CD4-positive, alpha-beta memory T cell (primary cell): ENCODE measurements at regions of chr2 and their contacts with region 1.

Region 1: GRCh38 chr2:43131024-43131889 is 95.1 kb downstream of the ZFP36L2 start:
- DNase-seq: peak; percentile 90 to 96 (median 91)
- H3K4me3 ChIP-seq: peak overlapping the region; percentile 26 to 31
- H3K4me3 Mint-ChIP-seq: peak overlapping the region; percentile 17 to 86 (median 64)
- H3K27ac ChIP-seq: peak overlapping the region; percentile 83
- H3K27ac Mint-ChIP-seq: peak overlapping the region; percentile 97 to 100 (median 100)
- H3K4me1 ChIP-seq: peaks cover 91% of the 10 kb centered on the region
- H3K4me1 Mint-ChIP-seq: peaks cover 67 to 92% (median 81%) of the 10 kb centered on the region in 4 donors
- H3K27me3 ChIP-seq: no peaks in the 10 kb centered on the region
- H3K27me3 Mint-ChIP-seq: no peaks in the 10 kb centered on the region

Region 2: GRCh38 chr2:42974721-42975717 is 156.2 kb before region 1 on chr2:
- CTCF ChIA-PET with region 1: interaction called, 5 read pairs
- POLR2A ChIA-PET with region 1: interaction called, 3 read pairs
- intact Hi-C with region 1: loop called (anchors 10 kb)
- DNase-seq: peak in 4 of 5 donors; percentile 25 to 43 (median 29)
- H3K4me3 ChIP-seq: no peak overlapping the region
- H3K4me3 Mint-ChIP-seq: no peak overlapping the region
- H3K27ac ChIP-seq: no peak overlapping the region
- H3K27ac Mint-ChIP-seq: peak overlapping the region in 1 of 7 donors; percentile 50
- H3K4me1 ChIP-seq: no peaks in the 10 kb centered on the region
- H3K4me1 Mint-ChIP-seq: peaks cover 0 to 5% (median 3%) of the 10 kb centered on the region in 4 donors
- H3K27me3 ChIP-seq: no peaks in the 10 kb centered on the region
- H3K27me3 Mint-ChIP-seq: no peaks in the 10 kb centered on the region

Region 3: DNA sequence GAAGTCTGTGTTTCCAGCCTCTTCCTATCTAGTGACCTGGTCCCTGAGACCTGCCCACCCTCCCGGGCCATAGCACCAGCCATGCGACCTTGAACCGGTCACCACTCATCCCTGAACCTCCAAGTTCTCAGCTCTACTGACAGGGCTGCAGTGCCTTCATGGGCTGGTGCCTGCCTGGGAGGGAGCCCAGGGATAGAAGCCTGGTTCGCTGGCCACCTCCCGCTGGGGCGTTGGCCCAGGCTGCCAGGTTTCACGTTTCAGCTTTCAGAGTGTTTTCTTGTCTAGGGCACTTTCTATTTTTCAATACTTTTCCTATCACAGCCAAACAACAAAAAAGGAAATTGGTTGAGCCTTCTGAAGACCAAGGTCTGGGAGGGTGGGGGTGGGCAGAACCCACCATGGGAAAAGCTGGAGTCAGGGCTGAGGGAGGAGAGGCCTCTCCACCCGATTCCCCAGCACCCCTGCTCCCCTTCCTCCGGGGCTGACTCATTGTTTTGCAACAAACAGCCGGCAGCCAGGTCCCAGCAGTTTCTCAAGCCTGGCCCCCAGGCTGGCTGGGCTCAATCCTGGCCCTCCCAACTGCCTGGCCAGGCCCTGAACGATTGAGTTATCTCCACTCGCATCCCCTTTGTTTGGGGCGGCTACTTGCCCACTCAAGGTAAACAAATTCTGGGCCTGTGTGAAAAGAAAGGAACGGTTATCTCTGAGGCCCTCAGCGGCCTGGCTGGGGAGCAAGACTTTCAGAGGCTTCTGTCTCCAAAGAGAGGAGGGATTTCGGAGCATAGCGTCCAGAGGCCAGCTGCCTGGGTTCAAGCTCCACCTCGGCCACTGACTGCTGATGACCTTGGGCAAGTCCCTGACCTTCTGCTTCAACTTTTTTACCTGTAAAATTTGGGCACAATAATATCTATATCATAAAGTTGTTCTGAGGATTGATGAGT is 47.6 kb after region 1 on chr2:
- CTCF ChIA-PET with region 1: interaction called, 361 read pairs
- POLR2A ChIA-PET with region 1: interaction called, 1,220 read pairs
- intact Hi-C with region 1: loop called (anchors 1 kb)
- DNase-seq: peak in 1 of 5 donors; percentile 61
- H3K4me3 ChIP-seq: peak overlapping the region in 1 of 2 donors; percentile 7
- H3K4me3 Mint-ChIP-seq: peak overlapping the region in 7 of 8 donors; percentile 54 to 82 (median 72)
- H3K27ac ChIP-seq: peak overlapping the region; percentile 53
- H3K27ac Mint-ChIP-seq: peak overlapping the region; percentile 93 to 99 (median 98)
- H3K4me1 ChIP-seq: peaks cover 84% of the 10 kb centered on the region
- H3K4me1 Mint-ChIP-seq: peaks cover 58 to 80% (median 70%) of the 10 kb centered on the region in 4 donors
- H3K27me3 ChIP-seq: no peaks in the 10 kb centered on the region
- H3K27me3 Mint-ChIP-seq: no peaks in the 10 kb centered on the region

Region 4: DNA sequence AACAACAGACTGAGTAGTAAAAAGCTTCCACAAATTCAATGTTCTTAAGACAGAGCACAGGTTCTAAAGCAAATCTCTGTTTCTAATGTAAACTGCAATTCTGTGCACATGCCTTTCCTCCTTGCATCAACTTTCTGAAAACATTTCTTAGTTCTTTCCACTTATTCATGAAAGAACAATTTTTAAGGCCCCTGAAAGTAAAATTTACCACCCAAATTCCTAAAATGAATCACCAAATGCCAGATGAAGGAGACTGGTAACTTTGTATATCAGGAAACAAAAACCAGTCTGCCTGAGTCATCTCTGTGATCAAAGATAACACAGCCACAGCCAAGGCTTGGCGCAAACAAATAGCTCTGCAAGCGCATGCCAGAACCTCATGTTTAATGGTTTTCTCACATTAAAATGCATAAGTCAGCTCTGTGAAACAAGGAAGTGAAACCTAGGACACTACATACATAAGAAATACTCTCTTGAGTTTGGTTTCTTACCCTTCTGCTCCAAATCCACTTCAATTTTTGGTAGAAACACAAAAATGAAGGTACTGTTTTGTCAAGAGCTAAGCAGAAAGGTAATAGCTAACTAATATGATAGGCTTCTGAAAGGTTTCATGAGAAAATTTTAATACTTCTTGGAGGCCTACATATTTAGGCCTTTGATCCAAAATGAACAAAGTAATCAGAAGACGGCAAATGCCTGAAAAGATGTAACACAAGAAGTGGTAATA is 295.2 kb after region 1 on chr2:
- CTCF ChIA-PET with region 1: interaction called, 3 read pairs
- POLR2A ChIA-PET with region 1: interaction called, 3 read pairs
- intact Hi-C with region 1: loop called (anchors 5 kb)
- DNase-seq: peak; percentile 56 to 77 (median 61)
- H3K4me3 ChIP-seq: no peak overlapping the region
- H3K4me3 Mint-ChIP-seq: peak overlapping the region; percentile 1 to 81 (median 51)
- H3K27ac ChIP-seq: peak overlapping the region; percentile 20
- H3K27ac Mint-ChIP-seq: peak overlapping the region; percentile 3 to 92 (median 87)
- H3K4me1 ChIP-seq: peaks cover 39% of the 10 kb centered on the region
- H3K4me1 Mint-ChIP-seq: peaks cover 32 to 44% (median 37%) of the 10 kb centered on the region in 4 donors
- H3K27me3 ChIP-seq: no peaks in the 10 kb centered on the region
- H3K27me3 Mint-ChIP-seq: no peaks in the 10 kb centered on the region

Region 5: GRCh38 chr2:43542285-43542937 is 411.2 kb after region 1 on chr2:
- CTCF ChIA-PET with region 1: interaction called, 6 read pairs
- POLR2A ChIA-PET with region 1: interaction called, 5 read pairs
- intact Hi-C with region 1: loop called (anchors 1 kb)
- DNase-seq: peak; percentile 9 to 62 (median 54)
- H3K4me3 ChIP-seq: no peak overlapping the region
- H3K4me3 Mint-ChIP-seq: no peak overlapping the region
- H3K27ac ChIP-seq: no peak overlapping the region
- H3K27ac Mint-ChIP-seq: no peak overlapping the region
- H3K4me1 ChIP-seq: peaks cover 9% of the 10 kb centered on the region
- H3K4me1 Mint-ChIP-seq: peaks cover 5 to 10% (median 9%) of the 10 kb centered on the region in 4 donors
- H3K27me3 ChIP-seq: no peaks in the 10 kb centered on the region
- H3K27me3 Mint-ChIP-seq: no peaks in the 10 kb centered on the region